Vagina (tissue), 2 donors: ENCODE measurements at regions of chr7 and their contacts with region 1.

Region 1: DNA sequence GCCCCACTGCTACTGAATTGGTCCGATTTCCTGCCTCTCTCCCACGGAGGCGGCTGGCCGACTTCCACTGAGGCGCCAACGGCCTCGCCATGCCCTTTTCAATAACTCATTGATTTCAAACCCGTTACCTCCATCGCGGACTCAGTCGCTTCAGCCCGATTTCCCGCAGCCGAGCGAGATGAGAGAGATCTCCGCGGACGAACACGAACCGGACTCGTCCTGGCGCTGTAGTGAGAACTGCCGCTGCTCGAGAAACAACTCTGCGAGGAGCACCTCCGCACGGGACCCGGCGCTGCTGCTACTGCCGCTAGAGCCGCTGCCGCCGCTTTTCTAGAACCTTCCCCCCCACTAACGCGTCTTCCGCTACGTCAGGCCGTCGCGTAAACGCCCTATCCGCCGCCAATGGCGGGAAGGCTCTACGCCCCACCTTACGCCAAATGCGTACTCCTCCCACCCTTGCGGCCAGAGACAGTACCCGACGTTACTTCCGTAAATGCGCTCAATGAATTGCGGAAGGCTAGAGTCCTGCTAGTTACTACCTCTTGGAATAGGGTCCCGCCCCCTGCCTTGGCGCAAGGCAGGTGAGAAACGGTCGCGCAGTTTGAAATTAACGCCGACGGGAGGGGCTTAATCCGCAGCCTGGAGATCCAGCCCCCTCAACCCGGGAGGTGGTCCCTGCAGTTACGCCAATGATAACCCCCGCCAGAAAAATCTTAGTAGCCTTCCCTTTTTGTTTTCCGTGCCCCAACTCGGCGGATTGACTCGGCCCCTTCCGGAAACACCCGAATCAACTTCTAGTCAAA is at the start of gene HNRNPA2B1:
- DNase-seq: peak; percentile 98 to 99
- H3K4me3 ChIP-seq: peak within 1 kb of the TSS; percentile 81 to 98
- H3K27ac ChIP-seq: peak within 1 kb of the TSS; percentile 100
- H3K4me1 ChIP-seq: peaks cover 57% of the 10 kb centered on the region
- H3K27me3 ChIP-seq: no peaks in the 10 kb centered on the region
- CTCF ChIP-seq: peak in 1 of 3 experiments; percentile 16
- POLR2A ChIP-seq: peak; percentile 57 to 100
- total RNA-seq, gene HNRNPA2B1: 222 TPM

Region 2: DNA sequence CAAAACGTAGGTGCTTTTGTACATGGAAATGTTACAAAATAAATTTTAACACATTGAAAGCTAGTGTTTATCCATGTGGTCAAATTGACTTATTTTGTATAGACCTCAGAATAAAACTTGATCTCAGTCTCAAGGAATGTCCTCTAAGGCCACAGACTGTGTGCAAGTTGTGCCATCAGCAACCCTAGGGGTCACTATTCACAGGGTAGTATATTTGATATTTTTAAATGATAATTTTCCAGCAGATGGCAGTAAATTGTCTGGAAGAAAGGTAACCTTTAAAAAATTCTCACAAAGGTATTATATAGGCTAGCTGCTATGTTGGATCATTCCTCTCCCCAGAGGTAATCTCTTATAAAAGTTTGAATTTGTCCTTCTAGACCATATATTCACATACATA is 78.1 kb after region 1 on chr7:
- intact Hi-C with region 1: no loop called
- DNase-seq: no peak
- H3K4me3 ChIP-seq: no peak overlapping the region
- H3K27ac ChIP-seq: no peak overlapping the region
- H3K4me1 ChIP-seq: no peaks in the 10 kb centered on the region
- H3K27me3 ChIP-seq: no peaks in the 10 kb centered on the region
- CTCF ChIP-seq: no peak
- POLR2A ChIP-seq: no peak

Region 3: GRCh38 chr7:27150568-27151340 is 950.1 kb after region 1 on chr7:
- intact Hi-C with region 1: loop called (anchors 10 kb)
- DNase-seq: peak in 1 of 2 donors; percentile 86
- H3K4me3 ChIP-seq: peak overlapping the region; percentile 49 to 57
- H3K27ac ChIP-seq: peak overlapping the region; percentile 84
- H3K4me1 ChIP-seq: peaks cover 63% of the 10 kb centered on the region
- H3K27me3 ChIP-seq: no peaks in the 10 kb centered on the region
- CTCF ChIP-seq: peak in 2 of 3 experiments; percentile 12 to 81
- POLR2A ChIP-seq: peak in 1 of 2 donors; percentile 37